Gastrocnemius medialis (tissue), 4 donors: ENCODE measurements at regions of chr2 and their contacts with region 1.

Region 1: GRCh38 chr2:100818606-100819369 is 1.2 kb upstream of the NPAS2 start:
- DNase-seq: peak; percentile 86 to 88
- ATAC-seq: peak; percentile 59 to 64
- H3K4me3 ChIP-seq: peak overlapping the region; percentile 68 to 82 (median 70)
- H3K27ac ChIP-seq: peak overlapping the region; percentile 76 to 92 (median 88)
- H3K4me1 ChIP-seq: peaks cover 26 to 33% of the 10 kb centered on the region in 2 donors
- H3K27me3 ChIP-seq: no peaks in the 10 kb centered on the region
- CTCF ChIP-seq: peak in 2 of 5 experiments; percentile 11 to 30
- POLR2A ChIP-seq: peak; percentile 56 to 58

Region 2: DNA sequence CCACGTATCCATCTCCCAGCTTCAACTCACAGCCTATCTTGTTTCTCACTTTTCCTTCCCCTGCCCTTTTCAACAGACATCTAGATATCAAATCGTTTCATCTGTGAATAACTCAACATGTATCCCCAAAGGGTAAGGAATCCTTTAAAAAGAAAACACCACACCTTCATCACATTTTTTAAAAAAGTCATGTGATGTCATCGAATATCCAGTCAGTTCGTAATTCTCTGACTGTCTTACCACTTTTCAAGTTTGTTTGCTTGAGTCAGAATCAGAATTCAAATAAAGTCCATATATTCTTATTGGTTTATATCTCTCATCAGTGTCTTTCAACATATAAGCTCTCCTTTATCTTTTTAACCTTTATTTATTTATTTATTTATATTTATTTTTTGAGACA is 491.0 kb before region 1 on chr2:
- in situ Hi-C with region 1: no loop called
- intact Hi-C with region 1: no loop called
- DNase-seq: no peak
- ATAC-seq: no peak
- H3K4me3 ChIP-seq: no peak overlapping the region
- H3K27ac ChIP-seq: no peak overlapping the region
- H3K4me1 ChIP-seq: no peaks in the 10 kb centered on the region
- H3K27me3 ChIP-seq: no peaks in the 10 kb centered on the region
- CTCF ChIP-seq: no peak
- POLR2A ChIP-seq: no peak

Region 3: GRCh38 chr2:100446696-100447095 is 372.1 kb before region 1 on chr2:
- in situ Hi-C with region 1: no loop called
- intact Hi-C with region 1: no loop called
- DNase-seq: no peak
- ATAC-seq: no peak
- H3K4me3 ChIP-seq: no peak overlapping the region
- H3K27ac ChIP-seq: no peak overlapping the region
- H3K4me1 ChIP-seq: no peaks in the 10 kb centered on the region
- H3K27me3 ChIP-seq: no peaks in the 10 kb centered on the region
- CTCF ChIP-seq: no peak
- POLR2A ChIP-seq: no peak

Region 4: GRCh38 chr2:100752628-100753333 is 66.0 kb before region 1 on chr2:
- in situ Hi-C with region 1: no loop called
- intact Hi-C with region 1: loop called (anchors 5 kb)
- DNase-seq: no peak
- ATAC-seq: peak; percentile 81 to 90
- H3K4me3 ChIP-seq: no peak overlapping the region
- H3K27ac ChIP-seq: peak overlapping the region in 1 of 4 donors; percentile 28
- H3K4me1 ChIP-seq: peaks cover 0 to 7% of the 10 kb centered on the region in 2 donors
- H3K27me3 ChIP-seq: no peaks in the 10 kb centered on the region
- CTCF ChIP-seq: no peak
- POLR2A ChIP-seq: no peak

Region 5: GRCh38 chr2:100957996-100958653 is 139.3 kb after region 1 on chr2:
- in situ Hi-C with region 1: no loop called
- intact Hi-C with region 1: loop called (anchors 5 kb)
- DNase-seq: peak; percentile 70 to 79
- ATAC-seq: peak; percentile 95 to 99
- H3K4me3 ChIP-seq: peak overlapping the region in 1 of 4 donors; percentile 28
- H3K27ac ChIP-seq: peak overlapping the region in 1 of 4 donors; percentile 23
- H3K4me1 ChIP-seq: peaks cover 14 to 17% of the 10 kb centered on the region in 2 donors
- H3K27me3 ChIP-seq: no peaks in the 10 kb centered on the region
- CTCF ChIP-seq: no peak
- POLR2A ChIP-seq: no peak

Region 6: DNA sequence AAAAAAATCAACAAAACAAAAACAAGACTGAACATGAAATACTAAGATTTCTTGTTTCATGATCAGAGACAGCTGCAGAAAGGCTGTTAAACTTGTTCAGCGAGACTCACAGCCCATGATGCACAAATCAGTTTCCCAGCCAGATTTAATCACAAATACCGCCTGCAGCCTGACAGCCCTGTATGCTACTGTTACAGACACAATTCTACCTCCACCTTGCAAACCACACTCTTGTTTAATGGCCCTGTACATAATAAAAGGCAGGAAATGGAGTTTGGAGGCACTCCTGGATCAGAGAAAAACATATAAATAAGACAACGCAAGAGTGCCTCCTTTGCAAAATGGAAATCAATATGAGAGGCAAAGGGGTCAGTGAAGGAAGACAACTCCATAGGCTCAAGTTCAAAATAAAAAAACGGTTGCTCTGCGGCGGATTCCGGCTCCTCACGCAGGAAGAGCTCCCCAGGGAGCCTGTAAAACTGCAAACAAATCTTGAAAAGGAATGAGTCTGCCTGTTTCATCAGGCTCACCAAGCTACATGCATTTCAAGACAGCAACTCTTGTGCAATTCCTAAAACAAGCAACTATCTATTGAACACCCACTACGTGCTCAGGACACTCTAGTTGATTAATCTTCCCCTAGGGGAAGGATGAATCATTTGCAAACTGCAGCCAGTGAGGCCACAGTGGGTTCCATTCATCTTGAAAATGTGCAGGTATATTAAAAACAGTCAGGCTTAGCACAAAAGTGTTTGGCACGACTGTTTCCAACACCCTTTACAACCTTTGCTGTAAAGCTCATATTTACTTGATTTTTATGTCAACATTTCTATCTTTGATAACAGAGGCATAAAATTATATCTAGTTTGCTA is 294.8 kb after region 1 on chr2:
- in situ Hi-C with region 1: no loop called
- intact Hi-C with region 1: loop called (anchors 5 kb)
- DNase-seq: peak in 1 of 2 donors; percentile 47
- ATAC-seq: peak; percentile 22 to 25
- H3K4me3 ChIP-seq: peak overlapping the region in 3 of 4 donors; percentile 4 to 19 (median 9)
- H3K27ac ChIP-seq: peak overlapping the region; percentile 84 to 100 (median 99)
- H3K4me1 ChIP-seq: peaks cover 78 to 96% of the 10 kb centered on the region in 2 donors
- H3K27me3 ChIP-seq: no peaks in the 10 kb centered on the region
- CTCF ChIP-seq: peak in 2 of 5 experiments; percentile 10 to 20
- POLR2A ChIP-seq: peak in 1 of 2 donors; percentile 79

Region 7: DNA sequence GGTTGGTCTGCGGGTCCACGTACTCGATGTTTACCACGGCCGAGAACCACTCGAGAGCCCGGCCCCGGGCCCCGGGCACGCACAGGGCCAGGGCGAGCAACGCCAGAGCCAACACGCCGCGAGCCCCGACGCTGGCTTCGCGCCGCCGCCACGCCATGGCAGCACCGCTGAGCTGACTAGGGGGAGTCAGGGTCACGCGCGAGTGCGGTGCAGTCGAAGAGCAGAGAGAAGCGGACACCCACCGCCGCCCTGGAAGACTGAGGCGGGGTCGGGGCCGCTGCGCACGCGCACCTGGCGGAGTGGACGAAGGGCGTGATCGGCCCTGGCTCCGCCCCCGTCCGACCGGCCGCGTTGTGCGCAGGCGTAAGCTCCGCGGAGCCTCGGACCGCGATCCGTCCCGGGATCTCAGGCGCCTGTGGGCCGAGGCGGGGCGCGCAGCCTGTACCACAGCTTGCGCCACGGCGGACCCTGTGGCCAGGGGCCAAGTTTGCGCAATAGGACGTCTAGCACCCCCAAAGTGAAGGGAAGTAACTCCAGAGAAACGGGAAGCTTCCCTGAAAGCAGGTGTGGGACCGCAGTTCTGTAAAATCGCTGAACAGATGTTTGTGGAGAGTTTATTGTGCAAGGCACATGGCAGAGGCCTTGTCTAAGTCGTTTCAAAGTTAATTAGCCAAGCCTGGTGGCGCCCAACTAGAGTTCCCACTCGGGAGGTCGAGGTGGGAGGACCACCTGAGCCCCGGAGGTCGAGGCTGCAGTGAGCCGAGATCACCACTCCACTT is 489.8 kb after region 1 on chr2 and contains the start of gene RNF149:
- in situ Hi-C with region 1: no loop called
- intact Hi-C with region 1: loop called (anchors 10 kb)
- DNase-seq: peak; percentile 85 to 89
- ATAC-seq: peak; percentile 77 to 86
- H3K4me3 ChIP-seq: peak within 1 kb of the TSS; percentile 81 to 99 (median 90)
- H3K27ac ChIP-seq: peak within 1 kb of the TSS; percentile 89 to 98 (median 94)
- H3K4me1 ChIP-seq: peaks cover 26 to 40% of the 10 kb centered on the region in 2 donors
- H3K27me3 ChIP-seq: no peaks in the 10 kb centered on the region
- CTCF ChIP-seq: peak in 1 of 5 experiments; percentile 6
- POLR2A ChIP-seq: peak; percentile 95 to 96
- total RNA-seq, gene RNF149: 14.7 to 27.7 (median 18.5) TPM